ENCODE measurements at regions of chr3 and their contacts with region 1.

Region 1: GRCh38 chr3:87088993-87089841 is 98.3 kb upstream of the VGLL3 start:
- DNase-seq: peak; percentile 63 to 78
- ATAC-seq: peak; percentile 78 to 92 (median 90)
- H3K4me3 ChIP-seq: peak overlapping the region; percentile 77
- H3K27ac ChIP-seq: peak overlapping the region; percentile 67
- H3K4me1 ChIP-seq: peaks cover 4% of the 10 kb centered on the region
- H3K27me3 ChIP-seq: no peaks in the 10 kb centered on the region
- CTCF ChIP-seq: no peak

Region 2: GRCh38 chr3:86990734-86991481 is 98.3 kb before region 1 on chr3 and contains the start of gene VGLL3:
- intact Hi-C with region 1: loop called in 1 of 2 experiments (anchors 5 kb)
- DNase-seq: peak; percentile 76 to 77
- ATAC-seq: peak; percentile 70 to 83 (median 81)
- H3K4me3 ChIP-seq: peak within 1 kb of the TSS; percentile 71
- H3K27ac ChIP-seq: peak within 1 kb of the TSS; percentile 69
- H3K4me1 ChIP-seq: no peaks in the 10 kb centered on the region
- H3K27me3 ChIP-seq: peaks cover 0 to 28% (median 0%) of the 10 kb centered on the region in 3 donors
- CTCF ChIP-seq: no peak
- total RNA-seq, gene VGLL3: 3.2 to 15.1 (median 11.8) TPM

Region 3: GRCh38 chr3:87041191-87041590 is 48.0 kb before region 1 on chr3:
- intact Hi-C with region 1: no loop called
- DNase-seq: no peak
- ATAC-seq: no peak
- H3K4me3 ChIP-seq: no peak overlapping the region
- H3K27ac ChIP-seq: no peak overlapping the region
- H3K4me1 ChIP-seq: no peaks in the 10 kb centered on the region
- H3K27me3 ChIP-seq: no peaks in the 10 kb centered on the region
- CTCF ChIP-seq: no peak